ENCODE measurements at regions of chr6 and their contacts with region 1.

Region 1: DNA sequence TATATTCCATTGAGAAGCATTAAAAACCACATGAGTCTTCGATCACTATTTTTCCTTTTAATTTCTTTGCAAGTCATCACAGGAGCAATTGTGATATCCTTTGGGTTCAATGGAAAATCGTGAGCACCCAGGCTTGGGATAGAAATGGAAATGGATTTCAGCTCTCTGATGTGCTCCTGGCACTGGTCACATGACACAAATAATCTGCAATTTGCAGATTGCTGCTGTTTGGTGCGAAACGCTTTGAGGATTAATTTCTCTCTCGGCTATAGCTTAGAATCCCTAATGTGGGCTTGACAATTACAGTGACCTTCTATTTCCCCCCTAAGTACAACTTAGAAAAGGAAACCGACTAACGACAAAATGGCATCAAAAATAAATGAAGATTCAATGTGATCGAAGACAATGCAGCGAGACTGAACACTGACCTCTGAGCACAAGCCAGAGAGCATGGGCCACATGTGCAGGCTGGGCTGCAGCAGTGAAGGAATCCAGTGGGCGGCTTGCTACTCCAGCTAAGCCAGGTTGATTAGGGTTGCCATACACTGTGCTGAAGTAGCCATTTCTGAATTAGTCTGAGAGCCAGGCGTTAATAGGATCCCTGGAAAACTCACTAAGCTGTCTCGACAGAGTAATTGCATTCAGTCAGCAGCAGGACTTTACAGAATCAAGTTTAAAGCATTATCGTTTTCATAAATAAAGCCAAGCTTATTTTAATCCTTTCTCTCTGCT is 301.8 kb upstream of the AGPAT4 start:
- DNase-seq: no peak

Region 2: DNA sequence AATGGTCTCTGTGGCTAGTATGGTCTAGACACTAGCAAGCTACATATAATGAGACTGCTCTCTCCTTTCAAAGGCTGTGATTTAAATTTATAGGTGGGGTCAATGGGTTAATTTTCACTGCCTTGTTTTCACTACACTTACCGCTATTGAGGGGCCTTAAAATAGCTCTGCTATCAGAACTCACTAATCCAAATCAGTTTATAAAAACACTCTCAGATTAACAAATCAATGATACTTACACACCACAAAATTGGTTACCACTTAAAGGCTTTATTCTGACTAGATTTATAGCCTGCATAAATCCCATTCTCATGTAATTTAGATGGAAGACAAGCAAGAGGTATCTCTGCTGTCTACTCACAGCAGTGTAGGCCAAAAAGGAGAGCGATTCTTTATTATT is 11.2 kb after region 1 on chr6:
- intact Hi-C with region 1: loop called (anchors 1 kb)
- DNase-seq: no peak

Region 3: DNA sequence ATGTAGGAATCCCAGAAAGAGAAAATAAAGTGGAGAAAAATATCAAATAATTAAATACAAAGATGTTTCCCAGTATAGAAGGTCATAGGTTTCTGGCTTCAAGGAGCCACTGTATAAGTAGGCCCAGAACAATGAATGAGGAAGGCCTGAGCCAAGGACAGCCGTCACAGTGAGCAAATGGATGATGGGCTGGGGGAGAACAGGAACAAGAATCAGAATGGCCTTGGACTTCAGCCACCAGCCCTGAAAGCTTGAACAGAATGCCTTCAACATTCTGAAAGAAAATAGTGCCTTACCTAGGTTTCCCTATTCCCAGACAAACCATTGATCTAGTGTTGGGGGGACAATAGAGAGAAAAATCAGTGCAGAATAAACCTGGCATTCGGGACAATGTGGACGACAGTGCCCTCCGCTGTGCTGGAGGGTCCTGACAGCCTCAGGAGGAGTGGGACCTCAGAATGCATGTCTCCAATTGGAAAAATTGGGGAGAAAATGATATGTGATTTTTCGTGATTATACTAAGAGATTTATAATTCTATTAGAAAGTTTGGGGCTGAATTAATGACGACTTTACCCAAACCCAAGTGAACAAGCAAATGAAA is 32.1 kb after region 1 on chr6:
- intact Hi-C with region 1: no loop called
- DNase-seq: no peak